T-cell (primary cell): ENCODE measurements at regions of chr20 and their contacts with region 1.

Region 1: DNA sequence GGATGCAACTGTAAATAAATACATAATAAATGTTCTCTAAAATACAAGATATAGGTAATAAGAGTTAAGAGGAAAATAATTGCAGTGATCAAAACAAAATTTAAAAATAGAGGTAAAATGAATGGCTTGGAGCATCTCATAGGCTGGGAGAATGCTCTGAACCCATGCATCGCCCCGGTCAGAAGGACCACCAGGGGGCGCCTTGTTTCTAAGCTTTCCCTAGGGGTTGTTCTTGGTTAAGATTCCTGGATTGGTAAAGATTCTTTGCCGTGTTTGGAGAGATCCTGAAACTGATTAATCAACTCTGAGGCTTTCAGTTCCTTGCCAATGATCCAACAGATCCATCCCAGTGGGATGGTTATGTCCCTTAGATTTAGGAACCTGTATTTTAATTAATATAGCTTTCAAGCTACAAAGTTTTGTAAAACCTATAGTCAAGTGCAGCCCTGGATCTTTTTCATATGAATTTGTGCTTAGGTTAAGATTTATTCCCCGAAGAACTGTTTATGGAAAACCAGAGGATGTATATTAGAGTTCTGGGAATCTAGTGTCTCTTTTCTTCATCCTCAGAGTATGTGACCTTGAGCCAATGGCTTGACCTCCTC is 45.3 kb upstream of the PRELID3B start:
- DNase-seq: peak; percentile 58 to 91 (median 81)
- ATAC-seq: peak; percentile 77 to 92 (median 80)
- H3K4me3 ChIP-seq: no peak overlapping the region
- H3K4me3 Mint-ChIP-seq: no peak overlapping the region
- H3K27ac ChIP-seq: no peak overlapping the region
- H3K27ac Mint-ChIP-seq: peak overlapping the region in 1 of 2 donors; percentile 31
- H3K4me1 ChIP-seq: no peaks in the 10 kb centered on the region
- H3K4me1 Mint-ChIP-seq: peaks cover 0 to 8% (median 4%) of the 10 kb centered on the region in 3 donors
- H3K27me3 ChIP-seq: peaks cover 0 to 6% of the 10 kb centered on the region in 2 experiments
- H3K27me3 Mint-ChIP-seq: peaks cover 0 to 1% of the 10 kb centered on the region in 2 donors

Region 2: GRCh38 chr20:59006864-59007664 is 80.9 kb before region 1 on chr20 and contains the start of gene CTSZ:
- CTCF ChIA-PET with region 1: no interaction called
- POLR2A ChIA-PET with region 1: no interaction called
- DNase-seq: peak in 17 of 35 experiments; percentile 11 to 53 (median 30)
- ATAC-seq: peak; percentile 62 to 76 (median 68)
- H3K4me3 ChIP-seq: peak within 1 kb of the TSS; percentile 35 to 51
- H3K4me3 Mint-ChIP-seq: peak within 1 kb of the TSS; percentile 70 to 83 (median 81)
- H3K27ac ChIP-seq: no peak within 1 kb of the TSS
- H3K27ac Mint-ChIP-seq: peak within 1 kb of the TSS; percentile 67 to 90
- H3K4me1 ChIP-seq: peaks cover 6 to 39% of the 10 kb centered on the region in 2 experiments
- H3K4me1 Mint-ChIP-seq: peaks cover 49 to 51% (median 51%) of the 10 kb centered on the region in 3 donors
- H3K27me3 ChIP-seq: peaks cover 0 to 8% of the 10 kb centered on the region in 2 experiments
- H3K27me3 Mint-ChIP-seq: no peaks in the 10 kb centered on the region
- total RNA-seq, gene CTSZ: 16.8 to 37.1 (median 26.1) TPM

Region 3: DNA sequence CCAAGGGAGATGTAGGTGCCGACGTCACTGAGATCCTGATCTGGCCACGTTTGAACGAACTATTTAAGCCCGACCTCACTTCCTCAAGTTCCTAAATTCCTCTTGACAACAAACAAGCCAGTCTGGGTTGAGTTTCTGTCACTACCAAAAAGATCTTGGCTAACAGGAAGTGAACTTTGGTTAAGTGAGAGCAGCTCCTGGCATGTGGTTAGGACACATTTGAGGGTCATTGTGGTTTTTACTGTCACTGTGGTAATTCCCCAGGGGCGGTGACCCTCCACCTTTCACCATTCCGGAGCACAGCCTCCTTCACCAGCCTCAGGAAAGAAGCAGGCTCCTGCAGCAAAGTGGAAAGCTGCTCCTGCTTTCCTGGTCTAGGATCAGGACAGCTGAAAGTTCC is 32.6 kb after region 1 on chr20:
- CTCF ChIA-PET with region 1: interaction called, 9 to 26 read pairs
- POLR2A ChIA-PET with region 1: interaction called in 1 of 2 experiments, 3 read pairs
- DNase-seq: peak in 27 of 35 experiments; percentile 13 to 71 (median 36)
- ATAC-seq: peak in 3 of 4 experiments; percentile 13 to 17 (median 14)
- H3K4me3 ChIP-seq: no peak overlapping the region
- H3K4me3 Mint-ChIP-seq: peak overlapping the region in 1 of 3 donors; percentile 84
- H3K27ac ChIP-seq: peak overlapping the region; percentile 89
- H3K27ac Mint-ChIP-seq: peak overlapping the region; percentile 99 to 100
- H3K4me1 ChIP-seq: peaks cover 68 to 76% of the 10 kb centered on the region in 2 experiments
- H3K4me1 Mint-ChIP-seq: peaks cover 86 to 95% (median 91%) of the 10 kb centered on the region in 3 donors
- H3K27me3 ChIP-seq: no peaks in the 10 kb centered on the region
- H3K27me3 Mint-ChIP-seq: no peaks in the 10 kb centered on the region

Region 4: DNA sequence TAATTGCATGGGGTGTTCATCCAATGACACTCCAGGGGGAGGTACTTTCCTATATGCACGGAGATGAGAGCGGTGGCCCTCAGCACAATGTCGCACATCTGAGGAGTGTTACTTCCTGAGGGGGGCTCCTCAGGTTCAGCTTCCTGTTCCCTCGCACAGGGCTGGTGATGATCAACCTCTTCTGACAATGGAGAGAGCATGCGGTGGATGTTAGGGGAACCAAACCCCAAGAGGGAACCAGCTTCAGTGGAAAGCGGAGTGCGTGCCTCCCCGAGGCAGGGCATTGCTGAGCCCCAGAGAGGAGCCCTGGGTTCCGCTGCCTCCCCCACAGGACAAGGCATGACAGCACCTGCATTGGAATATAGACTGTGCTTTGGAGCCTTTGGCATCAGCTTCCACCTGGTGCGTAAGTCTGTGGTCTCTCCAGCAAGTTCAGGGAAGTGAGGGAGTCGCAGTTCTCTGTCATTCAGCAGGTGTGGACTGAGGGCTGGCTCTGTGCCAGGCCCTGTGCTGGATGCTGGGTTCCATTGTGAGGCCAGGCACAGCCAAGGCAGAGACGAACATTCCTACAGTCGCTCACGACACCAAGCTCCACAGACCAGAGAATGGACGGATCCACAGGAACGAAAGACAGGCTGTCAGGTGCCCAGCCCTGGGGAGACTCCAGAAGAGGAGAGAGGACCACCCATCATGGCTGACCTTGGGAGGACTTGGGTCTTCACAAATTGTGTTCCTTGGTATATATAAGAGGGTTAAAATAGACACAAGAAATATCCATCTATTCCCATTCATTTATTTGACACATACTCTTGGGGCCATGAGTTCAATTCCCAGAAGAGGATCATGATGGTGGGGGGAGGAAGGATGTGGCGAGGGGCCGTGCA is 71.8 kb after region 1 on chr20:
- CTCF ChIA-PET with region 1: interaction called, 3 to 11 read pairs
- POLR2A ChIA-PET with region 1: interaction called in 1 of 2 experiments, 3 read pairs
- DNase-seq: peak; percentile 44 to 92 (median 83)
- ATAC-seq: peak; percentile 81 to 90 (median 85)
- H3K4me3 ChIP-seq: peak overlapping the region; percentile 1 to 73
- H3K4me3 Mint-ChIP-seq: peak overlapping the region; percentile 82 to 89 (median 87)
- H3K27ac ChIP-seq: peak overlapping the region; percentile 96
- H3K27ac Mint-ChIP-seq: peak overlapping the region; percentile 99
- H3K4me1 ChIP-seq: peaks cover 51 to 59% of the 10 kb centered on the region in 2 experiments
- H3K4me1 Mint-ChIP-seq: peaks cover 85 to 89% (median 87%) of the 10 kb centered on the region in 3 donors
- H3K27me3 ChIP-seq: no peaks in the 10 kb centered on the region
- H3K27me3 Mint-ChIP-seq: no peaks in the 10 kb centered on the region

Region 5: GRCh38 chr20:59207742-59208357 is 119.9 kb after region 1 on chr20:
- CTCF ChIA-PET with region 1: interaction called, 31 to 92 read pairs
- POLR2A ChIA-PET with region 1: interaction called in 1 of 2 experiments, 4 read pairs
- DNase-seq: peak; percentile 61 to 90 (median 80)
- ATAC-seq: peak; percentile 90 to 98 (median 92)
- H3K4me3 ChIP-seq: no peak overlapping the region
- H3K4me3 Mint-ChIP-seq: peak overlapping the region in 1 of 3 donors; percentile 56
- H3K27ac ChIP-seq: peak overlapping the region; percentile 30
- H3K27ac Mint-ChIP-seq: peak overlapping the region; percentile 73 to 88
- H3K4me1 ChIP-seq: peaks cover 18 to 31% of the 10 kb centered on the region in 2 experiments
- H3K4me1 Mint-ChIP-seq: peaks cover 36 to 41% (median 41%) of the 10 kb centered on the region in 3 donors
- H3K27me3 ChIP-seq: no peaks in the 10 kb centered on the region
- H3K27me3 Mint-ChIP-seq: no peaks in the 10 kb centered on the region

Region 6: GRCh38 chr20:59222253-59223181 is 134.6 kb after region 1 on chr20:
- CTCF ChIA-PET with region 1: interaction called, 3 to 17 read pairs
- POLR2A ChIA-PET with region 1: interaction called in 1 of 2 experiments, 3 read pairs
- DNase-seq: peak; percentile 46 to 86 (median 74)
- ATAC-seq: peak; percentile 93 to 96 (median 93)
- H3K4me3 ChIP-seq: peak overlapping the region; percentile 43 to 57
- H3K4me3 Mint-ChIP-seq: peak overlapping the region; percentile 76 to 82 (median 81)
- H3K27ac ChIP-seq: peak overlapping the region; percentile 44
- H3K27ac Mint-ChIP-seq: peak overlapping the region; percentile 86 to 88
- H3K4me1 ChIP-seq: peaks cover 0 to 23% of the 10 kb centered on the region in 2 experiments
- H3K4me1 Mint-ChIP-seq: peaks cover 31 to 34% (median 31%) of the 10 kb centered on the region in 3 donors
- H3K27me3 ChIP-seq: no peaks in the 10 kb centered on the region
- H3K27me3 Mint-ChIP-seq: no peaks in the 10 kb centered on the region

Region 7: DNA sequence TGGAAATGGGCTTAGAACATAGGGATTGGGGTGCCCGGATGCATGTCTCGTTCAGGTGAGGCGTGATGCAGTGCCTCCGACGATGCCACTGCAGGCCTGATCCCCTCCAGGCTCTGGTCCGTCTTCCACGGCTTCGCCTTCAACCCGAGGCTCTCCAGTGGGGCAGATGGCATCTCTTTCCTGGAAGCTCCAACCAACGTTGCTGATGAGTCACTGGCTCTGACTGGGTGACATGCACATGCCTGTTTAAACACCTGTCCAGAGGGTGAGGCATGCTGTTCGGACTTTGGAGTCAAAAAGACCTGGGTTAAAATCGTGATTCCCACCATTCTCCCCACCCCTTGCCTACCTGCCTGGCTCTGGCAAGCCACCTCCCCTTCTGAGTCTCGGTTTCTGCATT is 203.8 kb after region 1 on chr20:
- CTCF ChIA-PET with region 1: no interaction called
- POLR2A ChIA-PET with region 1: interaction called in 1 of 2 experiments, 11 read pairs
- DNase-seq: no peak
- ATAC-seq: no peak
- H3K4me3 ChIP-seq: no peak overlapping the region
- H3K4me3 Mint-ChIP-seq: no peak overlapping the region
- H3K27ac ChIP-seq: no peak overlapping the region
- H3K27ac Mint-ChIP-seq: no peak overlapping the region
- H3K4me1 ChIP-seq: no peaks in the 10 kb centered on the region
- H3K4me1 Mint-ChIP-seq: peaks cover 0 to 9% (median 4%) of the 10 kb centered on the region in 3 donors
- H3K27me3 ChIP-seq: peaks cover 0 to 23% of the 10 kb centered on the region in 2 experiments
- H3K27me3 Mint-ChIP-seq: peaks cover 14 to 16% of the 10 kb centered on the region in 2 donors